ENCODE measurements at regions of chr6 and their contacts with region 1.

Region 1: DNA sequence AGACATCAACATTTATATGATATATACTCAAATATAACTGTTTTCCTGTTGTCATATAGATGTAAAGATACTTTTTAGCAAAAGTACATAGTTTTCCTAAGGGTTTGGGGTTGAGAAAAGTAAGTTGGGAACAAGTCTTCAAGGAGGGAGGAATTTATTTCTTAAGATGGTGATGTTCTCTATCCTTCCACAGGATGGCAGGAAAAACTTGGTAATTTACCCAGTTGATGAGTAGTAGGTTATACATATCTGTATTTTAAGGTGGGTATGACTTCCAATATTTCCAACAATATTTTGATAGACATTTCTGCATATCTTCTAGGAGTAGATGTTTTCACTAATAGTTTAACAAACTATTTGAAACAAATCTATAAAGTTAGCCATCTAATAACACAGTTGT is 254.4 kb downstream of the RIMS1 start:
- DNase-seq: peak; percentile 11
- H3K4me3 ChIP-seq: no peak overlapping the region
- H3K27ac ChIP-seq: no peak overlapping the region
- H3K4me1 ChIP-seq: no peaks in the 10 kb centered on the region
- H3K27me3 ChIP-seq: no peaks in the 10 kb centered on the region
- CTCF ChIP-seq: peak; percentile 32 to 46

Region 2: GRCh38 chr6:72246926-72247325 is 106.1 kb after region 1 on chr6:
- CTCF ChIA-PET with region 1: no interaction called
- dilution Hi-C with region 1: no loop called
- in situ Hi-C with region 1: no loop called
- intact Hi-C with region 1: loop called (anchors 5 kb)
- DNase-seq: peak; percentile 1
- H3K4me3 ChIP-seq: no peak overlapping the region
- H3K27ac ChIP-seq: no peak overlapping the region
- H3K4me1 ChIP-seq: no peaks in the 10 kb centered on the region
- H3K27me3 ChIP-seq: no peaks in the 10 kb centered on the region
- CTCF ChIP-seq: peak in 1 of 2 donors; percentile 12

Region 3: DNA sequence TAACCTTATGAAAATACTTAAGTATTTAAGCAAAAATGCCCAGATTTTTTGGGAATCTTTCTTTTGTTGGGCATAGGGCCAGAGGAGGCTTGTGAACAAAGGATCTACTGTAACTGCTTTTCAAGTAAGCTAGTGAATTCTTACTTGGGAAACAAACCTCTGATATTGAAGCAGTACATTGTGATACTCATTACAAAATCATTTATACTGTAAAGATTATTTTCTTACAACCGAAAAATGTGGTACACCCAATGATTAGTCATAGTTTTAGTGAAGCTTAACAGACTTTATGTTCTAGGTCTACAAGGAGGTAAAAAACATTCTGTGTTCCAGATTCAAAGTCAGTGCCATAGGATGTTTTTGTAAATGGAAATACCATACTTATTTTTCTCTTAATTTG is 208.1 kb after region 1 on chr6:
- CTCF ChIA-PET with region 1: no interaction called
- dilution Hi-C with region 1: no loop called
- in situ Hi-C with region 1: no loop called
- intact Hi-C with region 1: no loop called
- DNase-seq: peak; percentile 86
- H3K4me3 ChIP-seq: no peak overlapping the region
- H3K27ac ChIP-seq: peak overlapping the region; percentile 40
- H3K4me1 ChIP-seq: peaks cover 11% of the 10 kb centered on the region
- H3K27me3 ChIP-seq: no peaks in the 10 kb centered on the region
- CTCF ChIP-seq: no peak